ENCODE measurements at regions of chr2 and their contacts with region 1.

Region 1: GRCh38 chr2:188512456-188512855 is 220.8 kb downstream of the GULP1 start:
- DNase-seq: no peak
- H3K4me3 ChIP-seq: no peak overlapping the region
- H3K27ac ChIP-seq: no peak overlapping the region
- H3K4me1 ChIP-seq: peaks cover 0 to 12% of the 10 kb centered on the region in 2 donors
- H3K27me3 ChIP-seq: no peaks in the 10 kb centered on the region
- CTCF ChIP-seq: peak; percentile 19 to 75 (median 60)
- POLR2A ChIP-seq: no peak

Region 2: DNA sequence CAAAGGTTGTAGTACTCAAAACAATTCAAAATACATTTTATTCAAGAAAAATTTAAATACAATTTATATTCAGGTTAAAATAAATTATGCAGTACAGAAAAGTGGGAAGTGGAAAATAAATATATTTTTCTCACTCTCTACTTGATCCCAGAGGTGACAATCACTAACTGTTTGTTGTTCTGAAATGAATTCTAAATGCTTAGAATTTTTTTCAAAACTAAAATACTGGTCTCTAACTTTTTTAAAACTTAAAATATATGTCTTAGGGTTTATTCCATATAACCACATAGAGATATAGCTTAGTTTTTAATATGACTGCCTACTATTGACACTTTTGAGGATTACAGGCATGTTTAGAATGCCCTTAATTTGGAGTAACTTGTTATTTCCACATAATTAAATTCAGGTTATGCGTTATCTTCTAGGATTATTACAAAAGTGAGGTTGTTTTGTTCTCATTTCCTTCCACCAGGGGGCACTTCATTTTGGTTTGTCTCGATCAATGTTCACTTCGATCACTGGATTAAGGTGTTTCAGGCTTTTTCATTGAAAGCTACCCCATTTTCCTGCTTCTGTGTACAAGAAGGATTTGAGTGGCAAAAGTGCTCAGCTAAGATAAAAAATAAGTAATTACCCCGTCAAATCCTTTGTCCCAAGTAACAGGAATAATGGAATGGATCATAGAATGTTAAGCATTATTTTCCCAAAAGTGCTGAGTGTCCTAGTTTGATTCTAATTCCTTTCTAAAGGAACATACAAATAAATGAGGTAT is 931.1 kb before region 1 on chr2:
- intact Hi-C with region 1: loop called in 1 of 2 experiments (anchors 10 kb)
- DNase-seq: peak in 2 of 7 donors; percentile 24 to 28
- H3K4me3 ChIP-seq: peak overlapping the region in 1 of 4 donors; percentile 39
- H3K27ac ChIP-seq: no peak overlapping the region
- H3K4me1 ChIP-seq: no peaks in the 10 kb centered on the region
- H3K27me3 ChIP-seq: no peaks in the 10 kb centered on the region
- CTCF ChIP-seq: peak; percentile 62 to 74 (median 66)
- POLR2A ChIP-seq: no peak

Region 3: DNA sequence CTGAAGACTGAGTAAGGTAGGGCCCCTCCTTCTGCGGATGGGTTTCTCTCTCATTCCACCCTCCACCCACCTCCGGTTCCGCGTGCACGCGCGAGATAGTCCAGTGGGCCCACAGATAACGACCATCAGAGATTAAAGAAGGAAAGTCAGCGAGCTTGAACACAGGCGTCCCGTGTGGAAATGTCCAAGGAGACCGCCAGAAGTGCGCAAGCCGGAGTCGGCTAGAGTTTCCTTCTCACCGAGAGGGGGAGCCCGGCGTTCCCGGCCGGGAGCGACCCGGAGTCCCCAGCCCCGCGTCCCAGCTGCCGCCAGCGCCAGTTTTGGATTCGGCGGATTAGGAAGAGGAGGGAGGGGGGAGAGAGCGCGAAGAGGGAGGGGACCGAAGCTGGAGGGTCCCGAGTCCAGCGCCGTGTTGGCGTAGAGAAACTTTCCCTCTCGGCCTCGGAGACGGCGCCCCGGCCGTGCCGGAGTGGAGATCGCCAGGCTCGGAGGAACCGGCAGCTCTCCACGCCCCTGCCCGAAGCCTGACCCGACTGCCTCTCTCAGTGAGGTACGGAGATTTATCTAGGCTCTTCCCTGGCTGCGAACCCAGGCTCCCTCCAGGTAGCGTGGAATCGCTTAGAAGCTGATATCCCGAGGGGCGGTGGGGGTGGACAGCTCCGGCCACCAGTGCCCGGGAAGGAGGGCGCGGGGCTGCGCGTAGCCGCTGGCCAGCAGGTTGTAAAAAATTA is 220.7 kb before region 1 on chr2 and contains the start of gene GULP1:
- intact Hi-C with region 1: loop called in 1 of 2 experiments (anchors 10 kb)
- DNase-seq: peak; percentile 78 to 86 (median 83)
- H3K4me3 ChIP-seq: peak within 1 kb of the TSS; percentile 60 to 96 (median 82)
- H3K27ac ChIP-seq: peak within 1 kb of the TSS; percentile 62 to 96 (median 93)
- H3K4me1 ChIP-seq: peaks cover 12 to 33% of the 10 kb centered on the region in 2 donors
- H3K27me3 ChIP-seq: no peaks in the 10 kb centered on the region
- CTCF ChIP-seq: peak; percentile 46 to 77 (median 64)
- POLR2A ChIP-seq: peak in 1 of 2 donors; percentile 56
- total RNA-seq, gene GULP1: 32.3 to 122 (median 66.7) TPM

Region 4: GRCh38 chr2:188399159-188399558 is 113.3 kb before region 1 on chr2:
- intact Hi-C with region 1: no loop called
- DNase-seq: no peak
- H3K4me3 ChIP-seq: no peak overlapping the region
- H3K27ac ChIP-seq: no peak overlapping the region
- H3K4me1 ChIP-seq: no peaks in the 10 kb centered on the region
- H3K27me3 ChIP-seq: no peaks in the 10 kb centered on the region
- CTCF ChIP-seq: no peak
- POLR2A ChIP-seq: no peak